Activated naive CD4-positive, alpha-beta T cell treated with anti-CD3 and anti-CD28 coated beads for 36 hours (primary cell): ENCODE measurements at regions of chr17 and their contacts with region 1.

Region 1: DNA sequence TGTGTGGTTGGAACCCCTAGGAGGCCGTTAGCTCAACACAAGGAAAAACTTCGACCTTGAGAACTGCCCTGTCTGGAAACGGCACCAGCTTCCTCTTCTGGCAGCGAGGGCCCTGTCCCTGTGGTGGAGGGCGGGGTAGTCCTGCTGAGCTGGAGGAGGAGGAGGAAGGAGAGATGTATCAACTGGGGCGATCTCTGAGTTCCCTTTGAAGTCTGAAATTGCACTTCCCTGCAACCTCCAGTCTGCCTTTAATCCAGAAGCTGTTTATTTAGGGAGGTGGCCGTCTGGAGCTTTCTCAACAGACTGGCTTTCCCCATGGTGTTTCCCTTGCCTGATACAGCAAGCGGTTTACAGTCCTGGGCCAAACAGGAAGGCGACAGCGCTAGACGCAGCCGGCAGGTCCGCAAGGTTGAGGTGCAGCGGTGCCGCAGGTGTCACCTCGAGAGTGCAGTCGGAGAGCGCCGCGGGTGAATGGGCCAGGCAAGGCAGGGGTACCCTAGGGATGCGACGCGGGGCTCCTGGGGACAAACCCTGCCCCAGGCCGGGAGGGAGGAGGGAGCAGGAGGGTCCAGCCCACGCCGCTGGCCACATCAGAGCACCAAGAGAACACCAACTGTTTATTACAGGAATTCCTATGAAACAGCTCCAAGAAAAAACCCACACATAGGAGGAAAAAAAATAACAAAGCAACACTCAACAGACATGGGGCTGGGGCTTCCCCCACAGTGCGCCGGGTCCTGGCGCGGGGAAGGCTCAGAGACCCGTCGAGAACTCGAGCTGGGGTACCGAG is 11.4 kb upstream of the MRPS23 start:
- DNase-seq: peak; percentile 51
- H3K4me3 Mint-ChIP-seq: peak overlapping the region; percentile 65
- H3K27ac Mint-ChIP-seq: no peak overlapping the region
- H3K4me1 Mint-ChIP-seq: peaks cover 8% of the 10 kb centered on the region
- H3K27me3 Mint-ChIP-seq: peaks cover 7% of the 10 kb centered on the region

Region 2: GRCh38 chr17:57833179-57833939 is 27.8 kb before region 1 on chr17:
- CTCF ChIA-PET with region 1: interaction called, 13 read pairs
- intact Hi-C with region 1: no loop called
- DNase-seq: peak; percentile 83
- H3K4me3 Mint-ChIP-seq: no peak overlapping the region
- H3K27ac Mint-ChIP-seq: no peak overlapping the region
- H3K4me1 Mint-ChIP-seq: peaks cover 4% of the 10 kb centered on the region
- H3K27me3 Mint-ChIP-seq: no peaks in the 10 kb centered on the region

Region 3: GRCh38 chr17:57892146-57892828 is 31.1 kb after region 1 on chr17:
- CTCF ChIA-PET with region 1: interaction called, 24 read pairs
- intact Hi-C with region 1: no loop called
- DNase-seq: peak; percentile 86
- H3K4me3 Mint-ChIP-seq: no peak overlapping the region
- H3K27ac Mint-ChIP-seq: no peak overlapping the region
- H3K4me1 Mint-ChIP-seq: peaks cover 2% of the 10 kb centered on the region
- H3K27me3 Mint-ChIP-seq: no peaks in the 10 kb centered on the region

Region 4: DNA sequence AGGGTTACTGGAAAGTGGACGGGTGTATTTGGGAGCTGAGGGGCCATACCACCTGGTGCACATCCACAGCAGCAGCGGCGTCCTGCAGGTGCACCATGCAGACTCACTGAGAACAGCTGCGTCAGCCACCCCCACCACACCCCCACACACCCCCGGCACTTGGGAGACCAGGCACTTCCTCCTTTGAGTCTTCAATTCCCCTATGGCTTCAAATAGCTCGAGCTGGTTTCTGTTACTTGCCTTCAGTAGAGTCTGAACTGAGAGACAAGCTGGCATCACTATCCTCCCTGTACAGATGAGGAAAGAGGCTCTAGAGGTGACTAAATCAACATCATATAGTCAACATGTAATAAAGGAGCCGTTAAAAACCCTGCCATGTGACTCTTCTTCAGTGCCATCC is 78.6 kb after region 1 on chr17:
- CTCF ChIA-PET with region 1: no interaction called
- intact Hi-C with region 1: no loop called
- DNase-seq: peak; percentile 34
- H3K4me3 Mint-ChIP-seq: no peak overlapping the region
- H3K27ac Mint-ChIP-seq: no peak overlapping the region
- H3K4me1 Mint-ChIP-seq: peaks cover 15% of the 10 kb centered on the region
- H3K27me3 Mint-ChIP-seq: peaks cover 3% of the 10 kb centered on the region

Region 5: DNA sequence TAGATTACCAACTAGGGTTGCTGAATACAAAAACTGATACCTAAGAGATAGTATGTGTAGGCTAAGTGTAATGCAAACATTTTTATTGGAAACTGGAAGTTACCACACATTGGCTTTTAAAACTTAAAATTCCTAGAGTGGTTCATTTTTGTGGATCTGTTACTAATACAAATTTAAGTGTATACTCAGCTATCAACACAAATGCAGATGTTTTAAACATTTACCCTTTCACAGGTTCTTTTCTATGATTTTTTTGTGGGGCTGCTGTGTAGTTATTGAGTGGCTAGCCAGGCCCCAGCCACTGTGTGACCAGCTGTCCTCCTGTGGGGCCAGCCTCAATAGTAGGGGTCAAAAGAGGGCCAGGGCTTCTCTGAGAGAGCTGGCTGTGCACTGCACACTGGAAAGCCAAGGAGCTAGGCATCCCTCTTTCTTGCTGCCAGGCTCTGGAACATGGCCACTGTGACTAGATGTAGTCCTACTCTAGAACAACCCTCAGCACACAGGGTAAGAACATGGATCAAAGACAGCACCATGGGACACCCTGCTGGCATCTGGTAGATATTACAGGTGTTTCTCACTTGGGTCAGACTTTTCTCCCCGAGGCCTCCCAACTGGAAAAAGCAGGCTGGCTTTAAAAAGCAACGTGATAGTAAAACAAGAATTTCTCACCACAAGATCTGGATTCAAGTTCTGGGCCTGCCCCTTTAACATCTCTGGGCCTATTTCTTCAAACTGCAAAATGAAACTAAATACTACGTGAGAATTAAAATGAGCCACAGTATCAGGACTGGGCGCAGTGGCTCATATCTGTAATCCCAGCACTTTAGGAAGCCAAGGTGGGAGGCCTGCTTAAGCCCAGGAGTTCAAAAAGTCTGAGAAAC is 134.1 kb after region 1 on chr17:
- CTCF ChIA-PET with region 1: interaction called, 43 read pairs
- intact Hi-C with region 1: loop called (anchors 1 kb)
- DNase-seq: peak; percentile 80
- H3K4me3 Mint-ChIP-seq: peak overlapping the region; percentile 14
- H3K27ac Mint-ChIP-seq: peak overlapping the region; percentile 68
- H3K4me1 Mint-ChIP-seq: peaks cover 70% of the 10 kb centered on the region
- H3K27me3 Mint-ChIP-seq: no peaks in the 10 kb centered on the region

Region 6: DNA sequence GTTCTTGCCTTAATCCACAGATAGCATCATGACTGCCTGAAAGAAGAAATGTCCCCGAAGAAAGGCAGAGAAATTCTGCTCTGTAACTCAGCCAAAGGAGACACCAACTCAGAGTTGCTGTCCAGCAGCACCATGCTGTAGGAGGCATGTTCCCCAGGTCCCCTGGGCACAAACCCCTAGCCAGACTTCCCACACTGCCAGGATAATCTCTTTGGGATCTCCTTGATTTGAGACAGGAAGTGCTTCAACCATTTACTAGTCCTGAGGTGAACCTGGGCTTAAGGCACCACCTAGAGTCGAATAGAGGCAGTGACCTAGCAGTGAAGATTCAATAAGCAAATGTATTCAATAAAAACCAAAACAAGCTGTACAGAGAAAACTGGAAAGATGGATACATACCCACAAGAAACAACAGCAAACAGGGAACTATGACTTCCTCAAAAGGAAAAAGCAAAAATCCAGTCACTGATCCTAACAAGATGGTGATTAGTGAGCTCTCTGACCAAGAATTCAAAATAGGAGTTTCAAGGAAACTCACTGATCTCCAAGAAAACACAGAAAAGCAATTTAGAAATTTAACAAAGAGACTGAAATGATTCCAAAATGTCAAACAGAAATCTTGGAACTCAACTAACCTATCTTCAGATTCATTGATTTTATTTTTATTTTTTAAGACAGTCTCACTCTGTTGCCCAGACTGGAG is 311.3 kb after region 1 on chr17:
- CTCF ChIA-PET with region 1: interaction called, 5 read pairs
- intact Hi-C with region 1: loop called (anchors 2 kb)
- DNase-seq: peak; percentile 70
- H3K4me3 Mint-ChIP-seq: no peak overlapping the region
- H3K27ac Mint-ChIP-seq: no peak overlapping the region
- H3K4me1 Mint-ChIP-seq: peaks cover 33% of the 10 kb centered on the region
- H3K27me3 Mint-ChIP-seq: no peaks in the 10 kb centered on the region